ENCODE measurements at regions of chr10 and their contacts with region 1.

Region 1: GRCh38 chr10:16436758-16437539 is at the start of gene PTER:
- DNase-seq: peak; percentile 98
- H3K4me3 Mint-ChIP-seq: peak within 1 kb of the TSS; percentile 88
- H3K27ac Mint-ChIP-seq: peak within 1 kb of the TSS; percentile 88
- H3K4me1 Mint-ChIP-seq: peaks cover 40% of the 10 kb centered on the region
- H3K27me3 Mint-ChIP-seq: peaks cover 9% of the 10 kb centered on the region
- total RNA-seq, gene PTER: 10.7 and 12.6 TPM in 2 replicates

Region 2: DNA sequence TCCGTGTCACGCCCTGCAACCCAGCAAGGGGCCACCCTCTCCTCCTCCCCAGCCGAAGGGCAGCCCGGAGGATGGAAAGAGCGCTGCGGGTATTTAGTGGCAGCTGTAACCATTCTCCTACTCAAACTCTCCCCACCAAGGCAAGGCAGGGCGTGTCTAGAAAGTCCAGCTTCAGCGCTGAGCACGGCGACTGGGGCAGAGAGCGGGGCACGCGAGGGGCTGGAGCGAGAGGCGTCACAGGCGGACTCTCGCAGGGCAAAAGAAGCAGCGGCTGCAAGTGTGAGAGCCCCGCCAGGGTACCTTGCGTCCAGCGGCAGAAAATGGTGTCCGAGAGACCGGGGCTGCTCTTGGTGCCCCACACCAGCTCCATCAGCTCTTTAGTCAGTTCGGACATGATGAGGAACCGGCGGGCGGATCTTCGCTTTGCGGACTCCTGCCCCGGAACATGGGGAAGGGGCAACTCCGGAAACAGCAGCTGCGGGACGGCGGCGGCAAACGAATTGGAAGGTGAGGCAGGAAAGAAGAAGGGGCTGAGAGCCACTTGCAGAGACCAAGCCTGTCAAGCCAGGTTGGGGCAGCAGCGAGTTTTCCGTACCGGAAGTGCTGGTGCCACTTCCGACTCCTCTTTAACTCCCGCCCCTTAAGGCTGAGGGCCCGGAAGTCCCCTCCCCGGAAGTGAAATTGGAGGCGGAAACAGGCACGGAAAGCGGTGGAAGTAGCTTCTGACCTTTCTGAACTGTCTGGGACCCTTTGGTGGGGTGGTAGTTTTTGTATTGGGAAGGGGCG is 576.9 kb before region 1 on chr10 and contains the start of gene MINDY3:
- intact Hi-C with region 1: loop called (anchors 1 kb)
- DNase-seq: peak; percentile 66
- H3K4me3 Mint-ChIP-seq: peak within 1 kb of the TSS; percentile 99
- H3K27ac Mint-ChIP-seq: peak within 1 kb of the TSS; percentile 93
- H3K4me1 Mint-ChIP-seq: peaks cover 36% of the 10 kb centered on the region
- H3K27me3 Mint-ChIP-seq: peaks cover 19% of the 10 kb centered on the region
- total RNA-seq, gene MINDY3: 14.5 and 16.2 TPM in 2 replicates

Region 3: GRCh38 chr10:16520900-16521299 is 84.0 kb after region 1 on chr10:
- intact Hi-C with region 1: loop called (anchors 1 kb)
- DNase-seq: peak; percentile 2
- H3K4me3 Mint-ChIP-seq: peak overlapping the region; percentile 19
- H3K27ac Mint-ChIP-seq: no peak overlapping the region
- H3K4me1 Mint-ChIP-seq: no peaks in the 10 kb centered on the region
- H3K27me3 Mint-ChIP-seq: peaks cover 50% of the 10 kb centered on the region

Region 4: DNA sequence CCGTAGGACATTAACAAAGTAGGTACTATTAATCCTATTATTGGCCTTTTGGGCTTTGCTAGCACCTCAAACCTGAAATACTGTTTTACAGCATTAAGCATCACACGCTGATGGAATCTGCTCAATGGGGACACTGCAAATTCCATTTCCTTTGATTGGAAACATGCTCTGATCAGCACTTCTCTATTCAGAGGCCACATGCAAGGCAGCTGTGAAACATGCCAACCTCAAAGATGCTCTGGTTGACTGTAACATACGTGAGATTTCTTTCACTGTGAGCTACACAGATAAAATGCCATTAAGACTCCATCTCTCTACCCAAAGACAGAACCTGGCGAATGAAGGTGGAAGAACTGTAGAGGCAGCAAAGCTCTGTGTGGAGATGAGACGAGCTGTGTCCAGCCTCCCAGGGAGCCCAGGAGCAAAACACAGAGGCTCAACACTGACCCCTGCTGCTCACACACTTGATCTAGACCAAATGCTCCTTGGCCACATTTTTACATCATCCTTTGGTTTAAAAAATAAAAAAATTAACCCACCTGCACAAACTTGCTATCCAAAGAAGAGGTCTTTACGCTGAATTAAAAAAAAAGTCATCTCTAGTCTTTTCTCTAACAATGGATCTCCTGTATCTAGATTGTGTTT is 372.2 kb after region 1 on chr10:
- intact Hi-C with region 1: loop called (anchors 2 kb)
- DNase-seq: no peak
- H3K4me3 Mint-ChIP-seq: no peak overlapping the region
- H3K27ac Mint-ChIP-seq: no peak overlapping the region
- H3K4me1 Mint-ChIP-seq: peaks cover 13% of the 10 kb centered on the region
- H3K27me3 Mint-ChIP-seq: no peaks in the 10 kb centered on the region

Region 5: GRCh38 chr10:17643755-17644484 is 1207.0 kb after region 1 on chr10 and contains the start of gene STAM:
- intact Hi-C with region 1: loop called (anchors 5 kb)
- DNase-seq: peak; percentile 87
- H3K4me3 Mint-ChIP-seq: peak within 1 kb of the TSS; percentile 99
- H3K27ac Mint-ChIP-seq: peak within 1 kb of the TSS; percentile 100
- H3K4me1 Mint-ChIP-seq: peaks cover 55% of the 10 kb centered on the region
- H3K27me3 Mint-ChIP-seq: no peaks in the 10 kb centered on the region
- total RNA-seq, gene STAM: 23.3 and 26.8 TPM in 2 replicates